ENCODE measurements at regions of chrX and their contacts with region 1.

Region 1: DNA sequence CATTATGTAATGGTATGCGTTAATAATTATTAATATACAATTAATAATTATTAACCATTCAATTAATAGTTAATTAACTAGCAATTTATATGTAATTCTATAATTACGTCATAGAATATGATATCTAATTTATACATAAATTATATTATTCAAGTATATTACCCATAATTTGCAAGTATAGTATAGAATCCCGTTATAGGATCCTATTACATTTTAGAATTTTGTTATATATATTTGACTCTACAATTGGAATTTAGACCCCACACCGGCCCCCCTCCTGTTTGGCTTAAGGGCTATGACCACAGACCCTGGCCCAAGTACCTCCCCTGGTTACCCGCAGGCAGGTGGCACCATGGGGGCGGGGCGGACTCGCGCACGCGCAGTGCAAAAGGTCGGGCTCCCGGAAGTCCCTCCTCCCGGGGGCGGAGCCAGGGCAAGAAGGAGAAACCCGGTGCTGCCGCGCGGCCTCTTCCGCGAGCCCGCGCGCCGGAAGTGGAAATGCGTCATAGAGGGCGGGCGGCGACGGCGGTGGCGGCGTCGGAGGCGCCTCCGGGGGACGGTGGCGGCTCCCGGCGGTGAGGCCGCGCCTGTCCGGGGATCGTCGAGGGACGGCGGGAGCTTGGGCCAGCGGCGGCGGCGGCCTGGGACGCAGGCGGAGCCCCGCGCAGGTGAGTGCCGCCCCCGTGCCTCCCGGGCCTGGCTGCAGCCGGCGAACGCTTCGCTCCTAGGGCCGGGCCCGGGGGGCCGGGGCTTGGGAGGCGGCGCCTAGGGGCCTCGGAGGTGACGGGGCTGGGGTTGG is at the start of gene AKAP17A:
- DNase-seq: peak; percentile 80 to 97
- H3K4me3 ChIP-seq: peak within 1 kb of the TSS; percentile 97 to 98
- H3K27ac ChIP-seq: peak within 1 kb of the TSS; percentile 82 to 87
- H3K4me1 ChIP-seq: peaks cover 0 to 9% of the 10 kb centered on the region in 2 donors
- H3K27me3 ChIP-seq: no peaks in the 10 kb centered on the region
- CTCF ChIP-seq: no peak
- total RNA-seq, gene AKAP17A: 74.0 TPM

Region 2: GRCh38 chrX:318739-319578 is 1272.3 kb before region 1 on chrX and contains the start of gene GTPBP6:
- intact Hi-C with region 1: loop called (anchors 1 kb)
- DNase-seq: peak; percentile 99 to 100
- H3K4me3 ChIP-seq: peak within 1 kb of the TSS; percentile 74 to 98
- H3K27ac ChIP-seq: peak within 1 kb of the TSS; percentile 91 to 96
- H3K4me1 ChIP-seq: peaks cover 0 to 16% of the 10 kb centered on the region in 2 donors
- H3K27me3 ChIP-seq: no peaks in the 10 kb centered on the region
- CTCF ChIP-seq: peak in 2 of 3 experiments; percentile 18 to 21
- total RNA-seq, gene GTPBP6: 56.2 TPM

Region 3: DNA sequence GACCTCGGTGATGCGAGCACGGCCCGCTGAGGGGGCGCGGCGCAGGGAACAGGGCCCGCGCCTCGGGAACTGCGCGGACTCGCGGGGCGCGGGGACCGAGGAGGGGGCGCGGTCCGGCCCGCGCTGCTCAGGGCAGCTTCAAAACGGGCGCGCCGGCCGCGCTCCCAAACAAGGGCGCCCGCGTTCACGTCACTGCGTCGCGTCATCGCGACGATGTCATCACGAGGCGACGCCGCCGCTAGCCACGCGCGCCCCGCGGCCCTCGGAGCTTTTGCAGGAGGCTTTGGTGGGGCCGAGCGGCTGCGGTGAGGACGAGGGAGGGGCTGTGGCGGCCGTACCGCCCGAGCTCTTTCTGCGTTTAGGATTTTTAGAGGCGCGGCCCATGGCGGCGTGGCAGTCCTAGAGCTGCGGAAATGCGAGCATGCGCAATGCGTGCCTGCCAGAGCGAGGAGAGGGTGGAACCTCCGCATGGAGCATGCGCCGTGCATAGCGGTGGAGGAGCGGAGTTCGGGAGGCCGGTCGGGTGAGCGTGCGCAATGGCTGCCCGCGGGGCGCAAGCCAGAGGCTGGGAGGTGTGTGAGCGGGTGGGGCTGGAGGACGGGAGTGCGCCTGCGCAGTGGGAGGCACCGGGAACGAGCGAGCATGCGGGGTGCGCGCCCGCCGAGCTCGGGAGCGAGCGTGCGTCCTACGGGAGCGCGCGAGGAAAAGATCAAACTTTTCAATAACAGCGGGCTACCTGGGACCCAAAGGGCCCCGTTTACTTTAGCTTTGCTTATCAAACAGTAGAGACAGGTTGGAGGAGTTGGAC is 1204.3 kb before region 1 on chrX and contains the start of gene PPP2R3B:
- intact Hi-C with region 1: loop called (anchors 5 kb)
- DNase-seq: peak; percentile 91 to 99
- H3K4me3 ChIP-seq: peak within 1 kb of the TSS; percentile 72 to 92
- H3K27ac ChIP-seq: peak within 1 kb of the TSS; percentile 94 to 99
- H3K4me1 ChIP-seq: peaks cover 0 to 5% of the 10 kb centered on the region in 2 donors
- H3K27me3 ChIP-seq: no peaks in the 10 kb centered on the region
- CTCF ChIP-seq: no peak
- total RNA-seq, gene PPP2R3B: 43.4 TPM

Region 4: DNA sequence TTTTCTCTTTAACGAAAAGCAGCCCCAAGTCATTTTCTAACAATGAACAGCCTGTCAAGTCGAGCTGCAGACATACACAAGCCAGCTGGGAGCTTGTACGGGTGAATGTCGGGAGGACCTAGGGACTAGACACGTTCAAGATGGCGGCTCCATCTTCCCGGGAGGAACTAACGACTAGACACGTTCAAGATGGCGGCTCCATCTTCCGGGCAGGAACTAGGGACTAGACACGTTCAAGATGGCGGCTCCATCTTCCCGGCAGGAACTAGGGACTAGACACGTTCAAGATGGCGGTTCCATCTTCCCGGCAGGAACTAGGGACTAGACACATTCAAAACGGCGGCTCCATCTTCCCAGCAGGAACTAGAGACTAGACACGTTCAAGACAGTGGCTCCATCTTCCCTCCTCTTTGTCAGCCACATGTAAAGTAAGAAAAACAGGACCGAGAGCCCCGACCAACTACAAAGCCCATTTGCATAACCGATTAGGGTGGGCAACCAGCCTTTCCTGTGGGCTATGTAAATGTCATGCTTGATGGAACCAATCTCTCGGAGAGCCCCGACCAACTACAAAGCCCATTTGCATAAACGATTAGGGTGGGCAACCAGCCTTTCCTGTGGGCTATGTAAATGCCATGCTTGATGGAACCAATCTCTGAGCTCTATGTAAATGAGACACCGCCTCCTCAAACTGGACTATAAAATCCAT is 733.9 kb after region 1 on chrX:
- intact Hi-C with region 1: loop called (anchors 2 kb)
- DNase-seq: peak; percentile 46 to 90
- H3K4me3 ChIP-seq: peak overlapping the region; percentile 61 to 67
- H3K27ac ChIP-seq: peak overlapping the region; percentile 71 to 78
- H3K4me1 ChIP-seq: no peaks in the 10 kb centered on the region
- H3K27me3 ChIP-seq: no peaks in the 10 kb centered on the region
- CTCF ChIP-seq: no peak

Region 5: GRCh38 chrX:2500267-2501075 is 909.2 kb after region 1 on chrX and contains the starts of genes DHRSX and ZBED1:
- intact Hi-C with region 1: loop called (anchors 5 kb)
- DNase-seq: no peak
- H3K4me3 ChIP-seq: peak within 1 kb of the TSS; percentile 84 to 99
- H3K27ac ChIP-seq: peak within 1 kb of the TSS; percentile 77 to 91
- H3K4me1 ChIP-seq: peaks cover 7 to 24% of the 10 kb centered on the region in 2 donors
- H3K27me3 ChIP-seq: no peaks in the 10 kb centered on the region
- CTCF ChIP-seq: no peak
- total RNA-seq, gene DHRSX: 13.4 TPM
- total RNA-seq, gene ZBED1: 34.6 TPM

Region 6: GRCh38 chrX:2690856-2691542 is 1099.7 kb after region 1 on chrX and contains the start of gene CD99:
- intact Hi-C with region 1: loop called (anchors 5 kb)
- DNase-seq: peak; percentile 39 to 96
- H3K4me3 ChIP-seq: peak within 1 kb of the TSS; percentile 86 to 94
- H3K27ac ChIP-seq: peak within 1 kb of the TSS; percentile 76 to 79
- H3K4me1 ChIP-seq: peaks cover 0 to 22% of the 10 kb centered on the region in 2 donors
- H3K27me3 ChIP-seq: no peaks in the 10 kb centered on the region
- CTCF ChIP-seq: no peak
- total RNA-seq, gene CD99: 262 TPM

Region 7: GRCh38 chrX:2928191-2928763 is 1337.0 kb after region 1 on chrX:
- intact Hi-C with region 1: loop called (anchors 2 kb)
- DNase-seq: peak in 1 of 2 donors; percentile 24
- H3K4me3 ChIP-seq: peak overlapping the region; percentile 83 to 92
- H3K27ac ChIP-seq: peak overlapping the region; percentile 97 to 99
- H3K4me1 ChIP-seq: no peaks in the 10 kb centered on the region
- H3K27me3 ChIP-seq: no peaks in the 10 kb centered on the region
- CTCF ChIP-seq: no peak